ENCODE measurements at regions of chr4 and their contacts with region 1.

Region 1: GRCh38 chr4:6200011-6200921 is at the start of gene JAKMIP1:
- DNase-seq: peak; percentile 80 to 90 (median 82)
- H3K4me3 ChIP-seq: peak within 1 kb of the TSS in 1 of 2 donors; percentile 62
- H3K4me3 Mint-ChIP-seq: peak within 1 kb of the TSS; percentile 76 to 94 (median 86)
- H3K27ac ChIP-seq: peak within 1 kb of the TSS; percentile 28
- H3K27ac Mint-ChIP-seq: peak within 1 kb of the TSS; percentile 57 to 90 (median 69)
- H3K4me1 ChIP-seq: peaks cover 36% of the 10 kb centered on the region
- H3K4me1 Mint-ChIP-seq: peaks cover 16 to 39% (median 22%) of the 10 kb centered on the region in 4 donors
- H3K27me3 ChIP-seq: no peaks in the 10 kb centered on the region
- H3K27me3 Mint-ChIP-seq: peaks cover 2% of the 10 kb centered on the region in 2 donors
- total RNA-seq, gene JAKMIP1: 3.0 to 3.7 TPM

Region 2: DNA sequence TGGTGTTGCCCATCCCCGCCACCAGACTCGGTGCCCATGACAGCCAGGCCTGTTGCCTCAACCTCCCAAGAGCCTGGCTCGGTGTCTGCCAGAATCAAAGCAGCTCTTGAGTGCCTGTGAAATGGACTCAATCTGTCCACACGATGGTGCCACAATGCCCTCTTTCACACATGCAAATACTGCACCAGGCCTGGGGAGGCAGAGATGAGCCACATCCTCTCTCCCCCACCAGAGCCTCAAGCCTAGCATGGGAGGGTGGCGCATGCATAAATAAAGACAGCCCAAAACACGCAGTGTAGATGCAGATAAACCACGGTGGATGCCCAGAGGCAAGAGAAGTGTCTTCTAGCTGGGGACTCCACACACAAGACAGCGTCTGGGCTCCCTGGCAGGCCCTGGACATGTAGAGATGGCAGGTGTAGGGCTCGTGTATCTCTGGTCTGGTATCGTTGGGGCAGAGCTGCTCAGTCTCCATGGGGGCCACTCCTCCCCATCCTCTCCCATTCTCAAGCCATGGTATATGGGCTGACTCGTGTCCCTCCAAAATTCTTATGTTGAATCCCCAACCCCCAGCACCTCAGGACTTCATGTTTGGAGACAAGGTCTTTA is 65.5 kb before region 1 on chr4:
- CTCF ChIA-PET with region 1: interaction called, 11 read pairs
- POLR2A ChIA-PET with region 1: interaction called, 7 read pairs
- intact Hi-C with region 1: loop called (anchors 1 kb)
- DNase-seq: peak; percentile 48 to 75 (median 60)
- H3K4me3 ChIP-seq: no peak overlapping the region
- H3K4me3 Mint-ChIP-seq: no peak overlapping the region
- H3K27ac ChIP-seq: no peak overlapping the region
- H3K27ac Mint-ChIP-seq: peak overlapping the region; percentile 6 to 78 (median 49)
- H3K4me1 ChIP-seq: peaks cover 11% of the 10 kb centered on the region
- H3K4me1 Mint-ChIP-seq: peaks cover 6 to 20% (median 14%) of the 10 kb centered on the region in 4 donors
- H3K27me3 ChIP-seq: no peaks in the 10 kb centered on the region
- H3K27me3 Mint-ChIP-seq: no peaks in the 10 kb centered on the region

Region 3: GRCh38 chr4:6269616-6270511 is 69.6 kb after region 1 on chr4 and contains the start of gene WFS1:
- CTCF ChIA-PET with region 1: no interaction called
- POLR2A ChIA-PET with region 1: interaction called, 5 read pairs
- intact Hi-C with region 1: loop called (anchors 1 kb)
- DNase-seq: peak; percentile 94 to 96 (median 94)
- H3K4me3 ChIP-seq: peak within 1 kb of the TSS in 1 of 2 donors; percentile 75
- H3K4me3 Mint-ChIP-seq: peak within 1 kb of the TSS; percentile 85 to 92 (median 88)
- H3K27ac ChIP-seq: peak within 1 kb of the TSS; percentile 49
- H3K27ac Mint-ChIP-seq: peak within 1 kb of the TSS in 6 of 7 donors; percentile 48 to 81 (median 71)
- H3K4me1 ChIP-seq: peaks cover 10% of the 10 kb centered on the region
- H3K4me1 Mint-ChIP-seq: peaks cover 13 to 25% (median 14%) of the 10 kb centered on the region in 4 donors
- H3K27me3 ChIP-seq: no peaks in the 10 kb centered on the region
- H3K27me3 Mint-ChIP-seq: peaks cover 0 to 2% of the 10 kb centered on the region in 2 donors
- total RNA-seq, gene WFS1: 5.4 to 5.5 TPM

Region 4: GRCh38 chr4:6761649-6762602 is 561.7 kb after region 1 on chr4:
- CTCF ChIA-PET with region 1: no interaction called
- POLR2A ChIA-PET with region 1: no interaction called
- intact Hi-C with region 1: no loop called
- DNase-seq: no peak
- H3K4me3 ChIP-seq: no peak overlapping the region
- H3K4me3 Mint-ChIP-seq: no peak overlapping the region
- H3K27ac ChIP-seq: no peak overlapping the region
- H3K27ac Mint-ChIP-seq: no peak overlapping the region
- H3K4me1 ChIP-seq: no peaks in the 10 kb centered on the region
- H3K4me1 Mint-ChIP-seq: peaks cover 0 to 9% (median 0%) of the 10 kb centered on the region in 4 donors
- H3K27me3 ChIP-seq: no peaks in the 10 kb centered on the region
- H3K27me3 Mint-ChIP-seq: no peaks in the 10 kb centered on the region